A673 (cell line): ENCODE measurements at regions of chr17 and their contacts with region 1.

Region 1: GRCh38 chr17:58556833-58557250 is 42.4 kb upstream of the MTMR4 start:
- DNase-seq: no peak
- H3K4me3 ChIP-seq: no peak overlapping the region
- H3K27ac ChIP-seq: no peak overlapping the region
- H3K4me1 ChIP-seq: no peaks in the 10 kb centered on the region
- H3K27me3 ChIP-seq: no peaks in the 10 kb centered on the region
- CTCF ChIP-seq: no peak

Region 2: GRCh38 chr17:58279736-58280479 is 276.9 kb before region 1 on chr17:
- CTCF ChIA-PET with region 1: interaction called, 11 read pairs
- POLR2A ChIA-PET with region 1: no interaction called
- intact Hi-C with region 1: no loop called
- DNase-seq: no peak
- H3K4me3 ChIP-seq: no peak overlapping the region
- H3K27ac ChIP-seq: no peak overlapping the region
- H3K4me1 ChIP-seq: no peaks in the 10 kb centered on the region
- H3K27me3 ChIP-seq: peaks cover 25% of the 10 kb centered on the region
- CTCF ChIP-seq: no peak

Region 3: DNA sequence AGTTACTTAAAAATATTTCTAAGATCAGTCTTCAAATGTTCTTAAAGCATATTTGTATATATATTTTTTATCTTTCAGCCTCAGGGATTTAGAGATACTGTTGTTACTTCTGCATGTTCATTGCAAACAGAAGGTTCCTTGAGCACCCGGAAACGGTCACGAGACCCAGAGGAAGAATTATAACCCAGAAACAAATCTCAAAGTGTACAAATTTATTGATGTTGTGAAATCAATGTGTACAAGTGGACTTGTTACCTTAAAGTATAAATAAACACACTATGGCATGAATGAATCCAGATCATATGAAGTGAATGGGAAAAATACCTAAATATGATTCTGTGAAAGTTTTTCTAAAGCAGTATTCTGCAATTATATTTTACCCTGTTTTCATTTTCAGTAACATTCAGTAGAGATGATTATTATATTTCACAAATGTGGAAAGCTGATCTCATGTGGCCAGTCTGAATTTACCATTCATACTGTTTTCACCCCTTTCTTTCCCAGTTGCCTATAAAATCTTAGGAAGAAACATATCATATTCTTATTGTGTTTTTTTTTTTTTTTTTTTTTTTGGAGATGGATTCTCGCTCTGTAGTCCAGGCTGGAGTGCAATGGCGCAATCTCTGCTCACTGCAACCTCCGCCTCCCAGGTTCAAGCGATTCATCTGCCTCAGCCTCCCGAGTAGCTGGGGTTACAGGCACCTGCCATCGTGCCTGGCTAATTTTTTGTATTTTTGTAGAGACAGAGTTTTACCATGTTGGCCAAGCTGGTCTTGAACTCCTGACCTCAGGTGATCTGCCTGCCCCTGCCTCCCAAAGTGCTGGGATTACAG is 177.4 kb after region 1 on chr17:
- CTCF ChIA-PET with region 1: no interaction called
- POLR2A ChIA-PET with region 1: no interaction called
- intact Hi-C with region 1: no loop called
- DNase-seq: no peak
- H3K4me3 ChIP-seq: no peak overlapping the region
- H3K27ac ChIP-seq: no peak overlapping the region
- H3K4me1 ChIP-seq: no peaks in the 10 kb centered on the region
- H3K27me3 ChIP-seq: no peaks in the 10 kb centered on the region
- CTCF ChIP-seq: no peak